Right ventricle myocardium superior (tissue), 1 donor: ENCODE measurements at regions of chr18 and their contacts with region 1.

Region 1: DNA sequence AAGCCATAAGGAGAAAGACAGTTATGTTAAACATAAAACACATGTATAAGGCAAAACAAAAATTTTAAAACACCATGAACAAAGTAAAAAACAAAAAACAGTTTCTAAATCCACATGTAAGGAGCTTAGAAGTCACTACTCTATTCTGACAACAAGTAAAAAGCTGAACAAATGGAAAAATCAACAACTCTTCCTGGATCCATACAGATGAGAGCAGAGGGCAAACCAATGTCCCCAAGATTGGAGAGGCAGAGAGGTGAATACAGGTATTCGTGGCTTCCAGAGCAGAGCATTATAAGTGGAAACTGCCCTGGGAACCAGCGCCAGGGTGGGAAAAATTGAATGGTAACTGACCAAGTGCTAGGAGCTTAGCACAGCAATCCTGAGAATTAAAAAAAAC is 93.5 kb downstream of the SPIRE1 start:
- DNase-seq: no peak
- ATAC-seq: no peak

Region 2: GRCh38 chr18:12628706-12629702 is 64.6 kb after region 1 on chr18:
- intact Hi-C with region 1: loop called (anchors 5 kb)
- DNase-seq: no peak
- ATAC-seq: no peak